Activated T-helper 1 cell treated with anti-CD3 and anti-CD28 coated beads, Interleukin-12 subunit alpha, Interleukin-12 subunit beta, Interleukin-2, Interleukin-4 antibody, amounts not matched to agents 30 ng/mL and 10 ng/mL and 1 ng/mL, durations not matched to agents 14 hours and 24 hours and 36 hours (primary cell): ENCODE measurements at regions of chr5 and their contacts with region 1.

Region 1: GRCh38 chr5:126354012-126354857 is 69.0 kb upstream of the GRAMD2B start:
- DNase-seq: no peak
- H3K4me3 Mint-ChIP-seq: no peak overlapping the region
- H3K27ac Mint-ChIP-seq: no peak overlapping the region
- H3K4me1 Mint-ChIP-seq: peaks cover 6% of the 10 kb centered on the region
- H3K27me3 Mint-ChIP-seq: peaks cover 18% of the 10 kb centered on the region

Region 2: DNA sequence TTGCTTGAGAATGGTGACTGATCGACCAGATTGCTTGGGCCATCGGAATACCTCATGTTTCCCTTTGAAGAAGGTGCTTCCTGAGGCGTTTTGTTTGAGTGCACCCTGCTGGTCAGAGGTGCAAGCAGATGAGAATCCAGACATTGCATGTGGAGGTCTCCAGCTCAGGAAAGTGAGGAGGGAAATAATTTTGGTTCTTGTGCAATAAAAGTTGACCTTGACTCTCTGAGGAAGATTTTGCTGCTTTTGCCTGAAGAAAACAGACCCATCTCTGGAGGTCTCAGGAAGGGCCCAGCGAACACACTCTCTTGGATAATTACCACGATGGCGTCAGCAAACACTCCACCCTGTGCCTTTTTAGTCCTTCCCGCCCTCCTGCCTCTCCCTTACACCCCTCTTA is 138.7 kb after region 1 on chr5:
- intact Hi-C with region 1: loop called (anchors 2 kb)
- DNase-seq: no peak
- H3K4me3 Mint-ChIP-seq: no peak overlapping the region
- H3K27ac Mint-ChIP-seq: no peak overlapping the region
- H3K4me1 Mint-ChIP-seq: no peaks in the 10 kb centered on the region
- H3K27me3 Mint-ChIP-seq: no peaks in the 10 kb centered on the region

Region 3: GRCh38 chr5:126499853-126500342 is 145.7 kb after region 1 on chr5:
- intact Hi-C with region 1: loop called (anchors 1 kb)
- DNase-seq: peak; percentile 11
- H3K4me3 Mint-ChIP-seq: no peak overlapping the region
- H3K27ac Mint-ChIP-seq: no peak overlapping the region
- H3K4me1 Mint-ChIP-seq: peaks cover 4% of the 10 kb centered on the region
- H3K27me3 Mint-ChIP-seq: no peaks in the 10 kb centered on the region